ENCODE measurements at regions of chr4 and their contacts with region 1.

Region 1: DNA sequence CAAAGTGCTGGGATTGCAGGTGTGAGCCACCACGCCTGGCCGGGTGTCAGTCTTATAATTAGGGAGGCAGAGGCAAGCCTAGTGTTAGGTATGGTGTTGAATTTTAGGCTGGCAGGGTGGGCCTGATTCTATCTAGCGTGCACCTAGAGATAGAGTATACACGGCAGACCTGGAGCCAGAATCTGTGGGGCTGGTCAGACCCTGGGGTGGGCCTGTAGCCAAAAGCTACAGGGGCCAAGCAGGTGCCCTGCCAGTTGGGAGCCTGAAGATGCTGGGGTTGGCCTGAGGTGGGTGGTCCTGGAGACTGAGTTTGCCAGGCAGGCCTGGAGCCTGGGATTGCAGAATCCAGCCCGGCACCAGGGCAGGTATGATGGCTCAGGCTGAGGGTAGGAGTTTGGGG is 1580.3 kb downstream of the ARAP2 start:
- DNase-seq: no peak
- H3K4me3 ChIP-seq: no peak overlapping the region
- H3K27ac ChIP-seq: no peak overlapping the region
- H3K4me1 ChIP-seq: no peaks in the 10 kb centered on the region
- H3K27me3 ChIP-seq: no peaks in the 10 kb centered on the region
- CTCF ChIP-seq: no peak

Region 2: GRCh38 chr4:35087218-35087617 is 423.2 kb after region 1 on chr4:
- intact Hi-C with region 1: loop called (anchors 10 kb)
- DNase-seq: no peak
- H3K4me3 ChIP-seq: no peak overlapping the region
- H3K27ac ChIP-seq: no peak overlapping the region
- H3K4me1 ChIP-seq: no peaks in the 10 kb centered on the region
- H3K27me3 ChIP-seq: no peaks in the 10 kb centered on the region
- CTCF ChIP-seq: no peak